ENCODE measurements at regions of chr2 and their contacts with region 1.

Region 1: DNA sequence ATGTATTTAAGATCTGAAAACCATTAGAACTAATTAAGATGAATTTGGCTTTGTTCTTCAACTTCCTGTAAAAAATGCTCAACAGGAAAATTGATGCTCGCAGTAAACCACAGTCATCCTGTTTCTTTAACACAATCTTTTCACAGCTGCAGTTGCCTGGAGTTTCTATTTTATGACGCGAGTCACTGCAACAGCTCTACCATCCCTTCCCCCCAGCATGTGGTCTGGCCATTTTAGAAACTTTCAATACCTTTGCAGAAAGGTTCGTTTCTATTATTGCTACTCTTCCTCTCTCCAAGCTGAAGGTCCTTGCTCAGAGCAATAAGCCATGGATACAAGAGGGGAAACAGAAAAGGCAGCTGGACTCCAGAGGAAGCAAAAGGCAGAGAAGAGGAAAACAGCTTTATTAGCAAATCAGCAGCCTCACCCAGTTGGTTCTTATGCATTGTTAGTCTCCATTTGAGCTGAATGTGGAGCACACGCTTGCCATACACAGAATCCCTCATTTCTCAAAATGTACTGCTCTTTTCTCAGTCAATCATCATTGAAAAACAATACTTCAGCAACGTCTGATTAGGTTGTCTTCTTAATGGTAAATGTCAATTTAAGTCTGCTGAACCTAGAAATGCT is 3.9 kb downstream of the WIPF1 start:
- DNase-seq: peak; percentile 94
- H3K4me3 ChIP-seq: peak overlapping the region; percentile 79
- H3K27ac ChIP-seq: peak overlapping the region; percentile 94
- H3K4me1 ChIP-seq: peaks cover 65% of the 10 kb centered on the region
- CTCF ChIP-seq: no peak

Region 2: GRCh38 chr2:173607606-173608311 is 985.9 kb before region 1 on chr2:
- CTCF ChIA-PET with region 1: no interaction called
- POLR2A ChIA-PET with region 1: interaction called, 4 read pairs
- intact Hi-C with region 1: loop called (anchors 2 kb)
- DNase-seq: no peak
- H3K4me3 ChIP-seq: no peak overlapping the region
- H3K27ac ChIP-seq: no peak overlapping the region
- H3K4me1 ChIP-seq: no peaks in the 10 kb centered on the region
- CTCF ChIP-seq: no peak

Region 3: DNA sequence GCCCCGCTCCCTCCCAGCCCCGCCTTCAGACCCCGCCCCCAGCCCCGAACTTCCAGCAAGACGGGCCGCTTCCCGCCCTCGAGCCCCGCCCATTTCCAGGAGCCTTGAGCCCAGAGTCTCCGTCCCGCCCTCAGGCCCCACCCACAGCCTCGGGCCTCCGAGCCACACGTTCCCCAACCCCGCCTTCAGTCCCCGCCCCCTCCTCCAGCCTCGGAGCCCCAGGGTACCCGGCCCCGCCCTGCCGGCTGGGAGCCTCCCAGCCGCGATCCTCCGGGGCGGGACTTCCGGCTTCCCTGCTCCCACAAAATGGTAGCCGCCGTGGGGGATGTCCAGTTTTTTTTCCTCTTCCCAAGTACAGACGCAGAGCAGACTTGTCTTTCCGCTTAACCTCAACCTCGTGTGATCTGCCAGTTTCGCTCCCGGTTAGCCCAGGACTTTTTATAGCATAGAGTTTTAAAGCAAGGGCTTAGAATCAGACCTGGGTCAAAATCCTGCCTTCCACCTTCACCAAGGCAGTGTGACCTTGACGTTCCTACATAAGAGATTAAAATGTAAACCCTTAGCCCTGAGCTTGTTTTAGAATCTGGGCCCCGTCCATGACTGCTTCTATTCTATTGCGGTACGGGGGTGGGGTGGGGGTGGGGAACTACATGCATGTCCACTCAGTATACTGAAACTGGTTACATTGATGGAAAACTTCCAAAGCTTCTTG is 106.4 kb before region 1 on chr2:
- CTCF ChIA-PET with region 1: no interaction called
- POLR2A ChIA-PET with region 1: interaction called, 6 read pairs
- intact Hi-C with region 1: loop called (anchors 2 kb)
- DNase-seq: peak; percentile 98
- H3K4me3 ChIP-seq: peak overlapping the region; percentile 83
- H3K27ac ChIP-seq: peak overlapping the region; percentile 26
- H3K4me1 ChIP-seq: peaks cover 18% of the 10 kb centered on the region
- CTCF ChIP-seq: no peak

Region 4: GRCh38 chr2:174577967-174578589 is 15.6 kb before region 1 on chr2:
- CTCF ChIA-PET with region 1: interaction called, 4 read pairs
- POLR2A ChIA-PET with region 1: interaction called, 21 read pairs
- intact Hi-C with region 1: no loop called
- DNase-seq: peak; percentile 69
- H3K4me3 ChIP-seq: no peak overlapping the region
- H3K27ac ChIP-seq: no peak overlapping the region
- H3K4me1 ChIP-seq: peaks cover 8% of the 10 kb centered on the region
- CTCF ChIP-seq: peak; percentile 92

Region 5: DNA sequence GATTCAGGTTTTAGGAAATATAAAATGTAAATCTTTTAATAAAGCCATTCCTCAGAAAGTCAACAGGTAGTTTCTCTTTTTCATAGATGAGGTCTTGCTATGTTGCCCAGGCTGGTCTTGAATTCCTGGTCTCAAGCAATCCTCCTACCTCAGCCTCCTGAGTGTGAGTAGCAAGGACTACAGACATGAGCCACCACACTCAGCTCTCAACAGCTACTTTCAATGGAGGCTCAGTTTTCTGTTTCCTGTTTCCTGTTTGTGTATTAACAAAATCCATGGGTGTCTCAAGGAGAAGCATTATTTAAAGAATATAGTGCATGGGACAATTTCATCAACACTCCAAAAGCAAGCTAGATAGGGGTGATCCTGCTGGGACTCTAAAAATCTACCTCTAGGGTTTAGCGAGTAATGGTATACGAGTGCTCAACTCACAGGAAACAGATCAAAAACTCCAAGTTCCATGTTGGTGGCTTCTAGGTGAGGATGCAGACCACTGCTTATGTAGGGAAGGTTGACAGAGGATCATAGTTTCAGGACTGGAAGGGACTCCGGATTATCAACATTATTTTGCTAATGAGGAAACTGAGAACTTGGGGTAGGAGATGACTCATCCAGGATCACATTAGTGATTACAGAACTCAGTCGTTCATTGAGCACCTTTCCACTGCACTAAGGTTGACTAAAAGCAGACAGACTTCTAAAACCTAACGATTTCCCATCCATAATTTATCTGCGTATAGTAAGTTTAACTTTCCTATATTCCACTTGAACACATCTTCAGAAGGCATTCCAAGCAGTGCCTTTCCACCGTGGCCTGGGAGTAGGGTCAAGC is 65.6 kb after region 1 on chr2:
- CTCF ChIA-PET with region 1: no interaction called
- POLR2A ChIA-PET with region 1: no interaction called
- intact Hi-C with region 1: loop called (anchors 2 kb)
- DNase-seq: no peak
- H3K4me3 ChIP-seq: no peak overlapping the region
- H3K27ac ChIP-seq: no peak overlapping the region
- H3K4me1 ChIP-seq: no peaks in the 10 kb centered on the region
- CTCF ChIP-seq: no peak

Region 6: GRCh38 chr2:175057078-175057685 is 463.5 kb after region 1 on chr2:
- CTCF ChIA-PET with region 1: no interaction called
- POLR2A ChIA-PET with region 1: no interaction called
- intact Hi-C with region 1: no loop called
- DNase-seq: no peak
- H3K4me3 ChIP-seq: no peak overlapping the region
- H3K27ac ChIP-seq: no peak overlapping the region
- H3K4me1 ChIP-seq: no peaks in the 10 kb centered on the region
- CTCF ChIP-seq: no peak

Measured in OCI-LY7 (cell line).